ENCODE measurements at regions of chr15 and their contacts with region 1.

Region 1: GRCh38 chr15:57861036-57861638 is 154.6 kb downstream of the POLR2M start:
- DNase-seq: no peak
- ATAC-seq: peak; percentile 36
- H3K4me3 Mint-ChIP-seq: no peak overlapping the region
- H3K27ac Mint-ChIP-seq: no peak overlapping the region
- H3K4me1 Mint-ChIP-seq: peaks cover 3% of the 10 kb centered on the region
- H3K27me3 Mint-ChIP-seq: peaks cover 79% of the 10 kb centered on the region

Region 2: GRCh38 chr15:57561041-57561711 is 300.0 kb before region 1 on chr15:
- CTCF ChIA-PET with region 1: interaction called, 16 read pairs
- DNase-seq: peak; percentile 75
- ATAC-seq: peak; percentile 83
- H3K4me3 Mint-ChIP-seq: no peak overlapping the region
- H3K27ac Mint-ChIP-seq: no peak overlapping the region
- H3K4me1 Mint-ChIP-seq: peaks cover 25% of the 10 kb centered on the region
- H3K27me3 Mint-ChIP-seq: peaks cover 27% of the 10 kb centered on the region

Region 3: DNA sequence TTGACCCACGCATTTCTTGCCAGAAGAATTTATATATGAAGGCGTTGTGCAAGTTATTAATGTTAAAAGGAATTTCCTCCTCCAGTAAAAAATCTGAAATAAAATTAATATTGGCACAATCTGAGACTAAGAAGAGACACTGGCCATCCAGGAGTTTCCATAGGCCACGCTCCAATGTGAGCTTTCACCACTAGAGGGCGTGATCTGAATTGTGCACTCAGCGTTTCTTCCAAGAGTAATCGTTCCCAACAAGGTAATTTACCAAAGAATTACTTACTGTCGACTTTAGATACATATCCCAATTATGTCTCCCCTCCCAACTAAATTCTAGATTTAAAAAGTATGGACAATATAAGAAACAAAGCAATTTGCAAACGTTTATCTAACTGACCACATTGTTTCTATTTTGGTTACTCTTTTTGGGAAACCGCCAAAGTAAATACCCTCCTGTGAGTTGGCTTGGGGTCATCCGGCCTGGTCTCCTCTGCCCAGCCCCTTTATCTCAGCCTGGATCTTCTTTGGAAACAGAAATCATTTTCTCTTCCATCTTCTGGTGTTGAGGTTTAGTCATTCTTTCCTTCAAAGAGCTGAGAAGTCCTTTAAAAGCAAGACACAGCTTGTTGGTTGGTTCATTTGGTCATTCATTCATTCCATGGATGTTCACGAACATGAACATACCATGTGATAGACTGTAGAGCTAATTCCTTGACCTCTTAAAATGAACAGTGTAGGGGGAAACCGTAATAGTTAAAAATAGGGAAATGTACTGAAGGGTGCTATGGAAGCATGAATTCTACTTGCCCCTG is 128.4 kb before region 1 on chr15:
- CTCF ChIA-PET with region 1: interaction called, 33 read pairs
- DNase-seq: peak; percentile 56
- ATAC-seq: no peak
- H3K4me3 Mint-ChIP-seq: no peak overlapping the region
- H3K27ac Mint-ChIP-seq: no peak overlapping the region
- H3K4me1 Mint-ChIP-seq: peaks cover 4% of the 10 kb centered on the region
- H3K27me3 Mint-ChIP-seq: no peaks in the 10 kb centered on the region

Region 4: DNA sequence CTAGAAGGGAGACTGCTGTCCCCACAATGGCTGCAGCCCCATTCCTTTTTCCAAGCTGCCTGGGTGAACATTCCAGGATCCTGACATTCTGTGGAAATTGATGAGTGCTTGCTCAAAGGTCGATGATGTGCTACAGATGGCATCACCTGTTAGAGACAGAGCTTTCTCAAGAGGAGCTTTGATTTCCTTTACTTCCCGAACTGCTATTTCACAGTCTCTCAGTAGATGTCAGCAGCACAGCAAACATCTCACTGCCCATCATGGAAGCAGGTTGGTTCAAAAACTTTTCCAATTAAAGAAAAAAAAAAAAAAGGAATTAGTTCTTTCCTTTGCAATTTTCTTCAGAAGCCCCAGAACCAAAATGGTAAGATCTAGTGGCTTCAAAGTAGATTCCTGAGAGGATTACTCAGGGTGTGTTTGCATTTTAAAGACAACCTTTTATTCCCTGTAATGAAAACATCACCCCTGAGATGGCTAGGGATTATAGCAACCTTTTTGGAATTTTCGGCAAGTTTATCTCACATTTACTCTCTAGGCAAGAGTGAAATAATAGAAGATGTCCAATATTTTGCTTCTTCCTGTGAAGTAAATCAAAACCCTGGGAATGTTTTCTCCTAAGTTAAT is 109.8 kb before region 1 on chr15:
- CTCF ChIA-PET with region 1: interaction called, 35 read pairs
- DNase-seq: no peak
- ATAC-seq: no peak
- H3K4me3 Mint-ChIP-seq: no peak overlapping the region
- H3K27ac Mint-ChIP-seq: no peak overlapping the region
- H3K4me1 Mint-ChIP-seq: no peaks in the 10 kb centered on the region
- H3K27me3 Mint-ChIP-seq: peaks cover 2% of the 10 kb centered on the region

Region 5: DNA sequence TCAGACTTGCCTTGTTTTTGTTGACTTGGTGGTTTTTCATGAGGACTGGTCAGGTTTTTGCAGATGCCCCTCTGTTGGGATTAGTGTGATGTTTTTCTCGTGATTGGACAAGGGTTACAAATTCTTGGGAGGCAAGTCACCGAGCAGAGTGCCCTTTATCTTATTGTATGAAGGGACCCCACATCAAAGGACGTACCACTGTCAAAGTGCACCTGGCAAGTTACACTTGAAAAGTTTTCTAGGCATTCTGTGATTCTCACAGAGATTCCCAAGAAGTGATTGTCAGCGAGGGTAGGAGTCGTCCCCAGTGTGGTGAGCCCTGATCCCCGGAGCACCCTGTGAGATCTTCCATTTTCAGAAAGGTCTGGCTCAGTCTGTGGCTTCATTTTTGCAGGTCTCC is 44.5 kb before region 1 on chr15:
- CTCF ChIA-PET with region 1: no interaction called
- DNase-seq: no peak
- ATAC-seq: no peak
- H3K4me3 Mint-ChIP-seq: no peak overlapping the region
- H3K27ac Mint-ChIP-seq: no peak overlapping the region
- H3K4me1 Mint-ChIP-seq: no peaks in the 10 kb centered on the region
- H3K27me3 Mint-ChIP-seq: peaks cover 34% of the 10 kb centered on the region

Region 6: DNA sequence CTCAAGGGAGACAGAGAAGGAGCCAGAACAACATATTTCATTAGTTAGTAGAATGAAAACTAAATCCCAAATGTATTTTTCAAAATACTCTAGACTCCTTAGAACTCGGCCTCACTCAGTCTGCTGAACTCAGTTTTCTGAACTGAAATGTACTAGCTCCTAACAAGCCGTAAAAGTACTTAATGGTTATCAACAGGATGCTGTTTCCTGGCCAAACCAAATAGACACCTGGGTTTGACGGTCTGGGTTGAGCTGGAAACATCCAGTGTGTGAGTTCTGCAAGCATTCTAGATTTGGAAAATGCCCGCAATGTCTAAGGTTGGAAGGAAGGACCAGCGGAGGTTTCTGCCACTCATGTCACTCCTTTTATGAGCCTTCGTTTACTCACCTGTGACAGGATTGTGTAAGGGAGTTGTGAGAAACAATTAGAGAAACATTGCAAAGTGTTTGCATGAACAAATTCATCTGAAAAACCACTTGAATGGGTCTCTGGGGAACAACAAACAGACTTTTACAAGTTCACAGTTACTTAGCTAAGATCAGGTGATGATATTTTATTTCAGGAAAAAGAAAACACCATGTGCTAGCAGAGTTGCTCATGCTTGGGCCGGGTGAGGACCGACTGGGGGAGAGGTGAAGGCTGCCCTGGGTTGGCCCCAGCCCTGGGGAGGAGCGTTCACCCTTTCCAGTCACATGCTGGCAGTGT is 53.4 kb after region 1 on chr15:
- CTCF ChIA-PET with region 1: no interaction called
- DNase-seq: no peak
- ATAC-seq: no peak
- H3K4me3 Mint-ChIP-seq: no peak overlapping the region
- H3K27ac Mint-ChIP-seq: no peak overlapping the region
- H3K4me1 Mint-ChIP-seq: no peaks in the 10 kb centered on the region
- H3K27me3 Mint-ChIP-seq: peaks cover 15% of the 10 kb centered on the region

Region 7: GRCh38 chr15:58010983-58011382 is 149.8 kb after region 1 on chr15:
- CTCF ChIA-PET with region 1: no interaction called
- DNase-seq: no peak
- ATAC-seq: no peak
- H3K4me3 Mint-ChIP-seq: no peak overlapping the region
- H3K27ac Mint-ChIP-seq: no peak overlapping the region
- H3K4me1 Mint-ChIP-seq: no peaks in the 10 kb centered on the region
- H3K27me3 Mint-ChIP-seq: peaks cover 40% of the 10 kb centered on the region

Measured in activated CD8-positive, alpha-beta memory T cell treated with anti-CD3 and anti-CD28 coated beads, Interleukin-2, amount 10 ng/mL, durations not matched to agents 7 days and 5 days (primary cell).